ENCODE measurements at regions of chr19 and their contacts with region 1.

Region 1: GRCh38 chr19:57435062-57435978 is at the start of gene ZNF749:
- DNase-seq: peak; percentile 97
- ATAC-seq: peak; percentile 98
- H3K4me3 Mint-ChIP-seq: peak within 1 kb of the TSS; percentile 92
- H3K27ac Mint-ChIP-seq: peak within 1 kb of the TSS; percentile 89
- H3K4me1 Mint-ChIP-seq: peaks cover 21% of the 10 kb centered on the region
- H3K27me3 Mint-ChIP-seq: no peaks in the 10 kb centered on the region
- total RNA-seq, gene ZNF749: 10.6 to 17.9 TPM

Region 2: DNA sequence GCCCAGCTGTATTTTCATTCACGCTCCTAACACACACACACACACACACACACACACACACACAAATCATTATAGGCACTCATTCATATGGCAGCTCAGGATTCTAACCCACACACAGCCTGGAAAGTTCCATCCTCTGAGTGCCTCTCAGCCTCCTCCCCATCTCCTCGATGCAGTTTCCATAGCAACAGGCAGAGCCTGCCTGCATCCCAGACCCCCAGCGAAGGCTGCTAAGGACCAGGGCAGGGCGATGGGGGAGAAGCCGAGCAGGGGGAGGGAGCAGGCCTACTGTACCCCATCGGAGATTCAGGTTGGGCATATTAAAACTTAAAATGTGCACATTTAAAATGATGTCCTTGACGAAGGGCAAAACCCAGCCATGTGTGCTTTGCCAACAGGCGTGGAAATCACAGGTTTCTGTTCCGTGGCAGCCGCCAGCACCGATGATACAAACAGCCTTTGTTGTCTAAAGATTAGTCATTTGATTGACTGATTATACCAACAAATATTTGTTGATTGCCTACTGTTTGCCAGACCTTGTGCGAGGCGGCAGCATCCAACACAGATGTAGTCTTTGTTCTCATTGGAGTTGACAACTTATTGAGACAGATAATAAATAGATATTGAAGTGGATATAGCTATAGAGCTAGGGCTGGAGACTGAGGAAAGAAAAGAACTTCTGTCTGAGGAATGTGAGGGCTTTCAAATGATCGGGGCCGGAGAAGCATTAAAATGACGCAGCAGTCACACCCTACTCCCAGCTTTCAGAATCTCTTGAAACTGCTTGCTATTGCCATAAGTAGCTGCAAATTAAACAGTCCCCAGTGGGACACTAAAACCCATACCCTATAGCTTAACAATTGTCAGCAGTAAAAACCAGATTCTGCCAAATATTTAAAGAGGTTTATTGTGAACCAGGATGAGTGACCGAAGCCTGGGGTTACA is 359.2 kb before region 1 on chr19:
- CTCF ChIA-PET with region 1: no interaction called
- POLR2A ChIA-PET with region 1: no interaction called
- intact Hi-C with region 1: no loop called
- DNase-seq: no peak
- ATAC-seq: no peak
- H3K4me3 Mint-ChIP-seq: no peak overlapping the region
- H3K27ac Mint-ChIP-seq: no peak overlapping the region
- H3K4me1 Mint-ChIP-seq: no peaks in the 10 kb centered on the region
- H3K27me3 Mint-ChIP-seq: no peaks in the 10 kb centered on the region

Region 3: GRCh38 chr19:57350877-57351805 is 84.2 kb before region 1 on chr19 and contains the start of gene ZNF304:
- CTCF ChIA-PET with region 1: no interaction called
- POLR2A ChIA-PET with region 1: no interaction called
- intact Hi-C with region 1: loop called in 1 of 2 experiments (anchors 1 kb)
- DNase-seq: peak; percentile 94
- ATAC-seq: peak; percentile 100
- H3K4me3 Mint-ChIP-seq: peak within 1 kb of the TSS; percentile 96
- H3K27ac Mint-ChIP-seq: peak within 1 kb of the TSS; percentile 90
- H3K4me1 Mint-ChIP-seq: peaks cover 25% of the 10 kb centered on the region
- H3K27me3 Mint-ChIP-seq: peaks cover 4% of the 10 kb centered on the region
- total RNA-seq, gene ZNF304: 6.2 TPM

Region 4: DNA sequence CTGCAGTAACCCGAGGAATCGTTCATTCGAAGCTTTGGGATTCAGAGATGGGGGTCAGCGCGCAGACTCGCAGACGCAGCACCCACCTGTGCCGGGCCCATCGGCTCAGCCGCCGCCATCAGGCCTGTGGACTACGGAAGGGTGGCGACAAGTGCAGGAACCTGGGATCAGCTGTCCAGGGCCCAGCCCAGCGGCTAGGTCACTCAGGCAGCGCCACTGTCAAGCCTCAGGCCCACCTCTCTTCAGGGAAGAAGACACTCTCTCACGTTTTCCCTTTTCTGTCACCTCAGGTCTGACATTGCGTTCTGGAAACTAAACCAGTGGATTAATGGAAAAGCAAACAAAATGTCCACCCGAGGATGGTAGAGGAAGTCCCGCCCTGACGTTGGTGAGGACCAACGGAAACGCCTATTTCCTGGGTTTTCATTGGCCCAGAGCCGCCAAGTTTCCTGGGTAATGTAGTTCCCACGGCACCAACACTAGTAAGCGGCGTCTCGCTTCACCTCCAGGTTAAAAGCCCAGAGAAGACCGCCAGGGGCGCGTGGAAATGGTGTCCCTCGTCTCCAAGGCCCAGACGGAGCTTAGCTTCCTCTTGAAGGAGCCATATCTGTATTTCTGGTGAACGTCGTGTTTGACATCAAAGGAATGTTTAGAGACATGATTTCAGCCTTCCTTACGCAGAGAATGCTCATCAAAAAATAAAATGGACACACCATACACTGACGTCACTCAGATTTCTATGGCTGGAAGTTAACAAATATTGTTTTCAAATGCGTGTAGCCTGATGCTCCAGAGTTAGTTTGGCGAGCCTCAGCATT is 42.1 kb after region 1 on chr19 and contains the start of gene ZNF772:
- CTCF ChIA-PET with region 1: no interaction called
- POLR2A ChIA-PET with region 1: no interaction called
- intact Hi-C with region 1: loop called (anchors 1 to 2 kb)
- DNase-seq: peak; percentile 92
- ATAC-seq: peak; percentile 100
- H3K4me3 Mint-ChIP-seq: peak within 1 kb of the TSS; percentile 76
- H3K27ac Mint-ChIP-seq: peak within 1 kb of the TSS; percentile 79
- H3K4me1 Mint-ChIP-seq: peaks cover 17% of the 10 kb centered on the region
- H3K27me3 Mint-ChIP-seq: no peaks in the 10 kb centered on the region
- total RNA-seq, gene ZNF772: 6.5 to 7.5 TPM

Region 5: GRCh38 chr19:57613941-57614743 is 178.8 kb after region 1 on chr19 and contains the start of gene ZNF134:
- CTCF ChIA-PET with region 1: no interaction called
- POLR2A ChIA-PET with region 1: no interaction called
- intact Hi-C with region 1: loop called in 1 of 2 experiments (anchors 1 kb)
- DNase-seq: peak; percentile 94
- ATAC-seq: peak; percentile 99
- H3K4me3 Mint-ChIP-seq: peak within 1 kb of the TSS; percentile 89
- H3K27ac Mint-ChIP-seq: peak within 1 kb of the TSS; percentile 79
- H3K4me1 Mint-ChIP-seq: peaks cover 19% of the 10 kb centered on the region
- H3K27me3 Mint-ChIP-seq: no peaks in the 10 kb centered on the region
- total RNA-seq, gene ZNF134: 7.6 to 9.7 TPM

Region 6: DNA sequence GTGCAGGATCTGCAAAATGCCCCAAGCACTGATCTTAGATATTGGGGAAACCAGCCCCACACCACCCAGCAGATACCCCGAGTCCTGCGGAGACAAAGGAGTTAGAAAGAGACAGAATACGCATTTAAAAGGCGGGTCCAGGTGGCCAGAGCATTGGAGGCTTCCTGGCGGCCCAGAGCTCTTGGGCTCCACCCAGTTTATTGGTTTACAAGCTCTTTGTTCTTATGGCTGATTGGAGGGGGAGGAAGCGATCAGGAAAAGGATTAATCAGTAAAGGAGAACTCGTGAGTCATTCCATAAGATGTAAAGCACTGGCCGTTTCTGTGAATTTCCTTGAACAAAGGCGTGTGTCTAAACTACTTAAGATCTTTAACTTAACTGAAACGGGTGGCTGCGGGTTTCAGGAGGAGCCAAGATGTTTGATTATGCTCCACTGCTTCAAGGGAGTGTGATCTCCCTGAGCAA is 415.3 kb after region 1 on chr19:
- CTCF ChIA-PET with region 1: no interaction called
- POLR2A ChIA-PET with region 1: no interaction called
- intact Hi-C with region 1: loop called in 1 of 2 experiments (anchors 1 kb)
- DNase-seq: peak; percentile 33
- ATAC-seq: no peak
- H3K4me3 Mint-ChIP-seq: peak overlapping the region; percentile 95
- H3K27ac Mint-ChIP-seq: peak overlapping the region; percentile 97
- H3K4me1 Mint-ChIP-seq: peaks cover 23% of the 10 kb centered on the region
- H3K27me3 Mint-ChIP-seq: no peaks in the 10 kb centered on the region

Region 7: DNA sequence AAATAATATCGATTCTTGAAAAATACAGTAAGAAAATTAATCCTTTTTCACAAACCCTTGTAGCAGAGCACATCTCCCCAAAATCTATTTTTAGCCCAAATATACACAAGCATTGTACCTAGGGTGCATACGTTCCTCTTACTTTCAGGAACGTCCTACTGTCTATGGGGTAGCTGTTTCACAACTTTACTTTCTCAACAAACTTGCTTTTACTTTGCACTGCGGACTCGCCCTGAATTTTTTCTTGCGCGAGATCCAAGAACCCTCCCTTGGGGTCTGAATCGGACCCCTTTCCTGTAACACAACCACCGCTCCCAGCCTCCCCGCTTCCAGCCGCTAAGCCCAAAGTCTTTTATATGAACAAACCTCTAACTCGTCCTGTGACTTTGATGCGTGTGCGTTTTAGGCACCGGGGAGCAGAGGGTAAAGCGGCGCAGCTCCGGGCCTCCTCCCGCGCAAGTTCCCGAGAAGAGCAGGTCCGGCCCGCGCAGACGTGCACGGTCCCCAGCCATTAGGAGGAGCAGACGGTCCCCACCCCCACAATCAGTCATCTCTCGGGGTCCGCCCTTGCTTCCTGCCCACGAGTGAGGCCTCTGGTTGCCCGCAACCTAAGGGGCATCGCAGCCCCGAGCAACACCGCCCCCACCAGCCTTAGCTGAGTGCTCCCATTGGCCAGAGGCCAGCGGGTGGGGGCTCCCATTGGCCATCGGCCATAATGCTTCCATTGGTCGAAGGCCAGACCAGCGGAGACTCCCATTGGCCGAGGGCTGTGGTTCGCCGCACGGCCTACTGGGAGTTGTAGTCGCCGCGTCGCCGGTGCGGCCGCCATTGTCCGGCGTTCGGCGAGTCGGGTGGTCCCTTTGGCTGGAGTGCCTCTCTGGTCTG is 843.1 kb after region 1 on chr19 and contains the start of gene ZNF8:
- CTCF ChIA-PET with region 1: no interaction called
- POLR2A ChIA-PET with region 1: no interaction called
- intact Hi-C with region 1: loop called in 1 of 2 experiments (anchors 1 kb)
- DNase-seq: peak; percentile 99
- ATAC-seq: peak; percentile 98
- H3K4me3 Mint-ChIP-seq: peak within 1 kb of the TSS; percentile 98
- H3K27ac Mint-ChIP-seq: peak within 1 kb of the TSS; percentile 95
- H3K4me1 Mint-ChIP-seq: peaks cover 28% of the 10 kb centered on the region
- H3K27me3 Mint-ChIP-seq: no peaks in the 10 kb centered on the region
- total RNA-seq, gene ZNF8: 4.4 to 4.5 TPM

Measured in activated CD4-positive, alpha-beta T cell treated with anti-CD3 and anti-CD28 coated beads for 36 hours (primary cell).